Right cardiac atrium (tissue), 5 donors: ENCODE measurements at regions of chr1 and their contacts with region 1.

Region 1: DNA sequence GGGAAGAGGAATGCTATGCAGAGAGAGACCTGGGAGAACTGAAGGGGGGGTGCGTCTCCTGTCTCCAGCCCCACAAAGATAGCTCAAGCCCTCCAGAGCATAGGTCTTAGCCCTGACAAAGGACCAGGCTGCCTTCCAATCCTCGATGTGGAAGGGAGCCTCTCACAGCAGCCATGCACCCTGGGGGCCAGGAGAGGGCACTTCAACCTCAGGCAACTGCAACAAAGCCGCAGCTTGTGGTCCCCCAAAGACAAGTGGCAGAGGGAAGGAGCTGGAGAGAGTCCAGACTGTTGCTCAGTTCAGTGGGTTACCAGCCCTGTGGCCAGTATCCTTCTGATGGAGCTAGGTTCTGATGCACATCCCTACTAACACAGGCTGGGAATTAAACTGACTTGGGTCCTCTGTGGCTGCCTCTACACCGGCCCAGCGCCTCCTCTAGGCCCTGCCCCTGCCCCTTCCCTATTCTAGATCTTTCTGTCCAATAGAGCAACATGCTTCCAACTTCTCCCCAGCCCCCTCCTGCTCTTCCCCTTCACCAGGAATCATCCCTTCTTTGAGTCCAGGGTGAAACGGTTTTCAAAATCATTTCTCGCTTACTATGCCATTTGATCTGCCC is 100.8 kb upstream of the SPATA6 start:
- DNase-seq: peak; percentile 58 to 82 (median 79)
- ATAC-seq: peak; percentile 71 to 75
- H3K4me3 ChIP-seq: no peak overlapping the region
- H3K27ac ChIP-seq: no peak overlapping the region
- H3K4me1 ChIP-seq: peaks cover 2% of the 10 kb centered on the region
- H3K27me3 ChIP-seq: no peaks in the 10 kb centered on the region

Region 2: DNA sequence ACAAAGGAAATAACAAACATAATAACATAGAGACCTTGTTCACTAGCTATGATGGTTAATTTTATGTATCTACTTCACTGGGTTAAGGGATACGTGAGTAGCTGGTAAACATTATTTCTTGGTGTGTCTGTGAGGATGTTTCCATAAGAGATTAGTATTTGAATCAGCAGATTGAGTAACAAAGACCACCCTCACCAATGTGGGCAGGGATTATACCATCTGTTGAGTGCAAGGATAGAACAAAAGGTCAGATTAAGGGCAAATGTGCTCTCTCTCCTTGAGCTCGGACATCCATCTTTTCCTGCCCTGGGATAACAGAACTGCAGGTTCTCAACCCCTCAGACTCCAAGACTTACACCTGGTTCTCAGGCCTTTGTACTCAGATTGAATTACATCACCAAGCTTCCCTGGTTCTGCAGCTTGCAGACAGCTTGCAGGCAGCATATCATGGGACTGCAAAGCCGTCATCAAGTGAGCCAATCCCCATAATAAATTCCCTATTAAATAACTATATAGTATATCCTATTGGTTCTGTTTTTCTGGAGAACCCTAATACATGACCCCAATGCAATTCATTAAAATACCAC is 109.9 kb before region 1 on chr1:
- intact Hi-C with region 1: no loop called
- DNase-seq: no peak
- ATAC-seq: no peak
- H3K4me3 ChIP-seq: no peak overlapping the region
- H3K27ac ChIP-seq: no peak overlapping the region
- H3K4me1 ChIP-seq: peaks cover 4% of the 10 kb centered on the region
- H3K27me3 ChIP-seq: no peaks in the 10 kb centered on the region

Region 3: DNA sequence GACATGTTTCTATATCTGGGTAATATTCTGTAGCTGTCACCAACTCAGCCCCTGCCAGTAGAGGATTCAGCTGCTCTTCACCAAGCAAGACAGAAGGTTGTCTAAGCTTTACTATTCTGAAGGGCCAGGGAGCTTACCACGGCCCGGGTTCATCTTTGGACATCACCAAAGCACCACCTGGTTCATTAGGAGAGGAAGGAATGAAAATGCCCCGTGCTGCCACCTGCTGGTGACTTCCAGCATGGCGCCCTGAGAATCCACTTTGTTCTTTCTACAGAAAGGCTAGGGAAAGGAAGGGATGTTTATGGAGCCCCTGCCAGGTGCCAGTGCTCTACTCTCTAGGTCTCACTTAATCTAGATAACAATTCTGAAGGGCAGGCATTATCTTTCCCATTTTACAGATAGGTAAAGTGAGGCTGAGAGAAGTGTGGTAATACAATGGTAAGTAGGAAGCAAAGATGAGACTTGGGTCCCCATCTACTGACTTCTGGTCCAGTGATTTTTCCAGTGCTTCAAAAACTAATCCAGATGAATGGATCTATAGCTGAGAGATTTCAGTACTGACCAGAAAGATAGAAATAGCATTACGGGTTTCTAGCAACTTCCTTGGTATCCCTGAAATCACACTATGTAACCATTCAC is 124.4 kb after region 1 on chr1:
- intact Hi-C with region 1: loop called (anchors 5 to 10 kb)
- DNase-seq: peak; percentile 38 to 81 (median 80)
- ATAC-seq: peak in 1 of 2 donors; percentile 46
- H3K4me3 ChIP-seq: no peak overlapping the region
- H3K27ac ChIP-seq: no peak overlapping the region
- H3K4me1 ChIP-seq: no peaks in the 10 kb centered on the region
- H3K27me3 ChIP-seq: no peaks in the 10 kb centered on the region

Region 4: GRCh38 chr1:48817505-48818114 is 244.9 kb after region 1 on chr1:
- intact Hi-C with region 1: loop called in 3 of 4 experiments (anchors 5 to 10 kb)
- DNase-seq: peak; percentile 61 to 83 (median 80)
- ATAC-seq: peak; percentile 71 to 82
- H3K4me3 ChIP-seq: no peak overlapping the region
- H3K27ac ChIP-seq: no peak overlapping the region
- H3K4me1 ChIP-seq: no peaks in the 10 kb centered on the region
- H3K27me3 ChIP-seq: no peaks in the 10 kb centered on the region

Region 5: DNA sequence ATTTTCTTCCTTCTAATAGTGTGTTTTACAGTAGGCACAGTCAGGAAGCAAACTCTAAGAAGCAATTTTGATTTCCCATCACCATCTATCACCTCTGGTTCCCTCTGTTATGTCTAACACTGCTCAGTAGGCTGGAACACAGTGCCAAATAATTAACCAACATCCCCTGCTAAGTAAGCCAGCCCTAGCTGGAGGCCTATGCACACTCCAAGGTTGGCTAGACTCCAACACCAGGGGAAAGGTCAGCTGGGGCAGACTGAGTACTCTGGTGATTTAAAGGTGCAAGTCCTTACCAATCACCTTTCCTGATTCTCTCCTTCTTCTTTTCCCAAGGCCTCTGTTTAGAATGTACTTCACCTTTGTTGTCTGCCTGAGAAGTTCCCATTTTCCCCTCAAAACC is 250.4 kb after region 1 on chr1:
- intact Hi-C with region 1: loop called in 3 of 4 experiments (anchors 5 to 10 kb)
- DNase-seq: peak in 1 of 3 donors; percentile 30
- ATAC-seq: peak in 1 of 2 donors; percentile 38
- H3K4me3 ChIP-seq: no peak overlapping the region
- H3K27ac ChIP-seq: no peak overlapping the region
- H3K4me1 ChIP-seq: no peaks in the 10 kb centered on the region
- H3K27me3 ChIP-seq: no peaks in the 10 kb centered on the region